ENCODE measurements at regions of chr17 and their contacts with region 1.

Region 1: DNA sequence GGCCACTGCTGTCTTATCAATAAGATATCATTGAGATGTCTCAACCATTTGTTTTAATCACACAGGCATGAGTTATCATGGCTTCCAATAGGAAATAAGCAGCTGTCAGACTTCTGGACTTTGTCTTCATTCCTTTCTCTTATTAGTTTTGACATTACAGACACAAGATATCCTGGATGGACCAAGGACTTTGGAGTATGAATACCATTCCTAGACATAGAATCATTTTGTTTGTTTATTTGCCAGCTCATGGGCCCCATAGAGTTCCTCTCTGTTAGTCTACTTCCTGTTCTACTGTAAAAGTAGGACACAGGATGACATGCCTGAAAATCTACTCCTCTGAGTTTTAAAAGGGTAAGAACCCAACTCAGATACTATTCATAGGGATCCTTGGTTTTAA is 77.7 kb upstream of the KCNJ16 start:
- DNase-seq: no peak
- H3K4me3 ChIP-seq: no peak overlapping the region
- H3K27ac ChIP-seq: no peak overlapping the region
- H3K4me1 ChIP-seq: no peaks in the 10 kb centered on the region
- H3K27me3 ChIP-seq: no peaks in the 10 kb centered on the region
- CTCF ChIP-seq: no peak

Region 2: DNA sequence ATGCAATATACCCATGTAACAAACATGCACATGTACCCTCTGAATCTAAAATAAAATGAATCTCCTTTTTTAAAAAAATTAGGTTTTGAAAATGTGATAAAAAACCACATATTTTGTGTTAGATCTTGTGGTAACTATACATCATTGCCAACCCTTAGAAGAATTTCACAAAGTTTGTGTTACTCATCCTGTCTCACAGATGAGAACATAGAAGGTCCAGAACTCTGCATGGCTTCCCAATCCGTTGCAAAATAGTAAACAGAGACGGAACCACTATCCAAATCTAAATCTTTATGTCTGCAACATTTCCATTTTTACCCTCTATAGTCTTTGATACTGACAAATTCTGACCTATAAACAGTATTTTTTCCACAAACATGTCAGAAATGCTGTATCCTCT is 931.9 kb after region 1 on chr17:
- intact Hi-C with region 1: loop called (anchors 5 kb)
- DNase-seq: no peak
- H3K4me3 ChIP-seq: no peak overlapping the region
- H3K27ac ChIP-seq: no peak overlapping the region
- H3K4me1 ChIP-seq: no peaks in the 10 kb centered on the region
- H3K27me3 ChIP-seq: no peaks in the 10 kb centered on the region
- CTCF ChIP-seq: no peak